ENCODE measurements at regions of chr7 and their contacts with region 1.

Region 1: GRCh38 chr7:108497082-108497725 is 28.7 kb downstream of the PNPLA8 start:
- DNase-seq: peak; percentile 24
- ATAC-seq: peak; percentile 80
- H3K4me3 ChIP-seq: no peak overlapping the region
- H3K27ac ChIP-seq: no peak overlapping the region
- H3K4me1 ChIP-seq: no peaks in the 10 kb centered on the region
- H3K27me3 ChIP-seq: no peaks in the 10 kb centered on the region
- CTCF ChIP-seq: peak; percentile 71 to 79 (median 73); a peak in 5 of 6 replicates
- EP300 ChIP-seq: no peak
- POLR2A ChIP-seq: no peak
- RAD21 ChIP-seq: peak; percentile 85

Region 2: GRCh38 chr7:108146070-108146837 is 350.9 kb before region 1 on chr7:
- CTCF ChIA-PET with region 1: interaction called, 13 read pairs
- POLR2A ChIA-PET with region 1: no interaction called
- RAD21 ChIA-PET with region 1: interaction called, 5 read pairs
- SMC1A ChIA-PET with region 1: interaction called, 4 read pairs
- in situ Hi-C with region 1: no loop called
- intact Hi-C with region 1: no loop called
- DNase-seq: peak; percentile 12
- ATAC-seq: peak; percentile 86
- H3K4me3 ChIP-seq: no peak overlapping the region
- H3K27ac ChIP-seq: no peak overlapping the region
- H3K4me1 ChIP-seq: no peaks in the 10 kb centered on the region
- H3K27me3 ChIP-seq: peaks cover 0 to 4% of the 10 kb centered on the region in 2 experiments; a peak in 1 of 4 replicates
- CTCF ChIP-seq: peak; percentile 81 to 94 (median 89)
- EP300 ChIP-seq: no peak
- POLR2A ChIP-seq: no peak
- RAD21 ChIP-seq: peak; percentile 100

Region 3: DNA sequence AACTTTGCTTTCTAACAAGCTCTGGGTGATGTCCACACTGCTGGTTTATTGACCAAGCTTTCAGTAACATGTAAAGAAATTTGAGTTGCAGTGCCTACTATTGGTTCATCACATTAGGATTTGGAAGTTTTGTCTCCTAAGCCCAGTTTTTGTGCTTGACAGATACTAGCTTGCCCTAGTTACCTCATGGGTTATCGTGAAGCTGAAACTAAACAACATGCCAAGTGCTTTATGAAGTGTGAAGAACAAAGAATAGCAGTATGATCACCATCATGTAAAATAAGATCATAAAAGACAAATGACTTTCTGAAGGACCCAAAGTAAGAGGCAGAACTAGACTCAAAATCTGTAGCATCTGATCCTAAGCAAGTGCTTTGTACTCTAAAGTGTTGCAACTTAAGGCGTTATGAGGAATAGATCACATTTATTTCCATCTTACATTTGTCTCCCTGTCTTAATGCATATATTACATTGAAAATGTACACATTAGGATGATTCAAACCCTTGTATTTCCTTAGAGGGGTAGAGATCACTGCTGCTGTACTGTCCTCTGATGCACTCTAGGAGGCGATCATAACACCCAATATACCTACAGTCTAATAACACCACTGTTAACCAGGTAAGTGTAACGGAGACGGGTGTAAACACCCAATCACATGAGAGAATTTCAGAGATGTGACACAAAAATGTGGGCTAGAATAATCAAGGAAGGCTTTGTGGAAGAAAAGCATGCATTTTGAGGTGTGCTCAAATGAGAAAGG is 112.3 kb before region 1 on chr7:
- CTCF ChIA-PET with region 1: interaction called, 22 read pairs
- POLR2A ChIA-PET with region 1: no interaction called
- RAD21 ChIA-PET with region 1: interaction called, 4 read pairs
- SMC1A ChIA-PET with region 1: interaction called, 6 read pairs
- in situ Hi-C with region 1: no loop called
- intact Hi-C with region 1: loop called (anchors 2 kb)
- DNase-seq: no peak
- ATAC-seq: peak; percentile 96
- H3K4me3 ChIP-seq: no peak overlapping the region
- H3K27ac ChIP-seq: no peak overlapping the region
- H3K4me1 ChIP-seq: no peaks in the 10 kb centered on the region; the same call in 1 of the 2 replicates
- H3K27me3 ChIP-seq: no peaks in the 10 kb centered on the region
- CTCF ChIP-seq: peak; percentile 43 to 51 (median 45); a peak in 4 of 6 replicates
- EP300 ChIP-seq: no peak
- POLR2A ChIP-seq: no peak
- RAD21 ChIP-seq: peak; percentile 71

Region 4: DNA sequence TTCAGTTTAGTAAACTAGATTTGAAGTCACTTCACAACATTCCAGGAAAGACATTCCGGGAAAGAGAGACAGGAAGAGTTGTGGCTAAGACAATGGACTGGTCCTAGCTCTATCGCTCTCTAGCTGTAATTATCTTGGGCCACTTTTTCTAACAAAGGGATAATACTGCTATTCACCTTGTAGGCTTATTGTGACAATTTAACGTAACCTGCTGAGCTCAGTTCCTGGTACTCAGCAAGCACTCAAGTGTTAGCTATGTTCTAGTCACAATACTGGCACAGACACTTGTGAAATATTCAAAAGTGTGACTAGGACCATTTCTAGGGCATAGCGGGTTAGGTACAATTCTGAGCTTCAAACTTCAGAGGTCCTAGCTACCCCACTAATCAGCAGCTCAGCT is 29.0 kb before region 1 on chr7:
- CTCF ChIA-PET with region 1: interaction called, 11 read pairs
- POLR2A ChIA-PET with region 1: no interaction called
- RAD21 ChIA-PET with region 1: interaction called, 5 read pairs
- SMC1A ChIA-PET with region 1: interaction called, 14 read pairs
- in situ Hi-C with region 1: no loop called
- intact Hi-C with region 1: no loop called
- DNase-seq: no peak
- ATAC-seq: peak; percentile 50; the same call in 2 of the 3 replicates
- H3K4me3 ChIP-seq: no peak overlapping the region
- H3K27ac ChIP-seq: no peak overlapping the region
- H3K4me1 ChIP-seq: no peaks in the 10 kb centered on the region
- H3K27me3 ChIP-seq: peaks cover 2% of the 10 kb centered on the region in 2 experiments; a peak in 3 of 4 replicates
- CTCF ChIP-seq: no peak
- EP300 ChIP-seq: no peak
- POLR2A ChIP-seq: no peak
- RAD21 ChIP-seq: no peak

Region 5: GRCh38 chr7:108511939-108512338 is 14.7 kb after region 1 on chr7:
- CTCF ChIA-PET with region 1: interaction called, 16 read pairs
- POLR2A ChIA-PET with region 1: no interaction called
- RAD21 ChIA-PET with region 1: interaction called, 9 read pairs
- SMC1A ChIA-PET with region 1: interaction called, 8 read pairs
- in situ Hi-C with region 1: no loop called
- intact Hi-C with region 1: no loop called
- DNase-seq: no peak
- ATAC-seq: peak; percentile 22; the same call in 2 of the 3 replicates
- H3K4me3 ChIP-seq: no peak overlapping the region
- H3K27ac ChIP-seq: no peak overlapping the region
- H3K4me1 ChIP-seq: no peaks in the 10 kb centered on the region
- H3K27me3 ChIP-seq: no peaks in the 10 kb centered on the region
- CTCF ChIP-seq: no peak
- EP300 ChIP-seq: no peak
- POLR2A ChIP-seq: no peak
- RAD21 ChIP-seq: no peak

Region 6: DNA sequence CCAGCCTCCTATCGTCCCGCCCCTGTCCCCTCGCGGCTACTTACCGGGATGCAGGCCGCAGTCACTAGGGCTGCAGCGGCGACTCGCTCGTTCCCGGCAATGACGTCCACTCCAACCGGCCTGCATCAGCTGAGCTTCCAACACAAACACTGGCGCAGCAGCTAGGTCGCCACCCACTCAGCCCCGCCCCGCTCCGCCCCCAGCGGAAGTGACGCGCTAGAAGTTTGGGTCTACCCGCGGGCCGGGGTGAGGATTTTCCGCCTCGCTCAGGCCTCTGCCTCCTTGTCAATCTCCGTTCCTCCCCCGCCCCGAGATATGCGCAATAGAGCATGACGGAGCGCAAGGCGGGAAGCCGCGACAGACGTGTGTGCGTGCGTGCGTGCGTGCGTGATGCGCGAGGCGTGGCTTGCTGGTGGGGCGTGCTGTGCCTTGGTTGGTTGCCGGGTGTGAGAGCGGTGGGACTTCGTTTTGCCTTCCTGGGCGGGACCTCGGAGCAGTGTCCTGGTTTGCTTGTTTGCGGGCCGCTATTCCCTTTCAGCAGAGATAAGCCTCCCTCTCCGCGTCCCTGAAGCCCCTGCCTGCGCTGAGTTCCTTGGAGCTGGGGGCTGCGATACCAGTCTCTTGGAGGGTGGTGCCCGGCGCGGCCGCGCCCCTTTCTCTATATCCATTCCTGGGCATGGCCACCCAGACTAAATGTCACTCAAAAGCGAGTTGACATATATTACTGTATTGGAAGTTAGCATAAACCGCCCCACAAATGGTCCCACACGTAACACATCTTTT is 29.0 kb after region 1 on chr7 and contains the start of gene PNPLA8:
- CTCF ChIA-PET with region 1: interaction called, 27 read pairs
- POLR2A ChIA-PET with region 1: no interaction called
- RAD21 ChIA-PET with region 1: interaction called, 4 read pairs
- SMC1A ChIA-PET with region 1: interaction called, 8 read pairs
- in situ Hi-C with region 1: no loop called
- intact Hi-C with region 1: no loop called
- DNase-seq: peak; percentile 98
- ATAC-seq: peak; percentile 96
- H3K4me3 ChIP-seq: peak within 1 kb of the TSS; percentile 85
- H3K27ac ChIP-seq: peak within 1 kb of the TSS; percentile 93
- H3K4me1 ChIP-seq: peaks cover 7% of the 10 kb centered on the region
- H3K27me3 ChIP-seq: no peaks in the 10 kb centered on the region
- CTCF ChIP-seq: no peak
- EP300 ChIP-seq: no peak; a peak in 2 of 4 replicates
- POLR2A ChIP-seq: peak; percentile 93
- RAD21 ChIP-seq: no peak
- polyA plus RNA-seq, gene PNPLA8: 9.8 to 12.0 TPM

Region 7: DNA sequence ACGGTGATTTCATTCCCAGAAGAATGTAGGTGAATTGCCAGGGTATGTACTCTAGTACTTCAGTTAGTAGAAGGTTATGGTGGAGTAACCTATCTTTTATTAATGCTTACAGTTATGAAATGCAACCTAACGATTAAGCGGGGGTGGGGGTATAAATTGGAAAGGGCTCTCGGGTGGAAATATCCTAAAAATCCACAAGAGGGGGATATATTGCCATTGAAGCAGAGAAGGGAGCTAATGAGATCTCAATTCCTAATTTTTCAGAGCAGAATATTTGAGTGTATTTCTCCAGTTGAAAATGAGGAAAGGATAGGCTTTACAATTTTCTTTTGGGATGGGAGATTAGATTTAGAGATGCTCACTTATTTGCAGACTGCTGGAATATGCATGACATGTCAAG is 163.3 kb after region 1 on chr7:
- CTCF ChIA-PET with region 1: no interaction called
- POLR2A ChIA-PET with region 1: no interaction called
- RAD21 ChIA-PET with region 1: no interaction called
- SMC1A ChIA-PET with region 1: no interaction called
- in situ Hi-C with region 1: no loop called
- intact Hi-C with region 1: no loop called
- DNase-seq: no peak
- ATAC-seq: no peak
- H3K4me3 ChIP-seq: no peak overlapping the region
- H3K27ac ChIP-seq: no peak overlapping the region
- H3K4me1 ChIP-seq: no peaks in the 10 kb centered on the region
- H3K27me3 ChIP-seq: no peaks in the 10 kb centered on the region; a peak in 1 of 4 replicates
- CTCF ChIP-seq: no peak; a peak in 1 of 6 replicates
- EP300 ChIP-seq: no peak
- POLR2A ChIP-seq: no peak
- RAD21 ChIP-seq: peak; percentile 24; the same call in 1 of the 2 replicates

Region 8: GRCh38 chr7:108736221-108736891 is 239.2 kb after region 1 on chr7:
- CTCF ChIA-PET with region 1: no interaction called
- POLR2A ChIA-PET with region 1: no interaction called
- RAD21 ChIA-PET with region 1: no interaction called
- SMC1A ChIA-PET with region 1: no interaction called
- in situ Hi-C with region 1: no loop called
- intact Hi-C with region 1: no loop called
- DNase-seq: no peak
- ATAC-seq: no peak
- H3K4me3 ChIP-seq: no peak overlapping the region
- H3K27ac ChIP-seq: no peak overlapping the region
- H3K4me1 ChIP-seq: no peaks in the 10 kb centered on the region
- H3K27me3 ChIP-seq: no peaks in the 10 kb centered on the region
- CTCF ChIP-seq: no peak
- EP300 ChIP-seq: no peak
- POLR2A ChIP-seq: no peak
- RAD21 ChIP-seq: no peak

Measured in GM12878 (cell line).